AG04449 (cell line): ENCODE measurements at regions of chr12 and their contacts with region 1.

Region 1: GRCh38 chr12:114625294-114625851 is 58.6 kb downstream of the TBX3 start:
- DNase-seq: no peak
- H3K4me3 ChIP-seq: no peak overlapping the region
- CTCF ChIP-seq: peak; percentile 84

Region 2: GRCh38 chr12:114636723-114637483 is 11.5 kb after region 1 on chr12:
- CTCF ChIA-PET with region 1: interaction called, 60 read pairs
- POLR2A ChIA-PET with region 1: no interaction called
- DNase-seq: no peak
- H3K4me3 ChIP-seq: no peak overlapping the region
- CTCF ChIP-seq: peak; percentile 39

Region 3: DNA sequence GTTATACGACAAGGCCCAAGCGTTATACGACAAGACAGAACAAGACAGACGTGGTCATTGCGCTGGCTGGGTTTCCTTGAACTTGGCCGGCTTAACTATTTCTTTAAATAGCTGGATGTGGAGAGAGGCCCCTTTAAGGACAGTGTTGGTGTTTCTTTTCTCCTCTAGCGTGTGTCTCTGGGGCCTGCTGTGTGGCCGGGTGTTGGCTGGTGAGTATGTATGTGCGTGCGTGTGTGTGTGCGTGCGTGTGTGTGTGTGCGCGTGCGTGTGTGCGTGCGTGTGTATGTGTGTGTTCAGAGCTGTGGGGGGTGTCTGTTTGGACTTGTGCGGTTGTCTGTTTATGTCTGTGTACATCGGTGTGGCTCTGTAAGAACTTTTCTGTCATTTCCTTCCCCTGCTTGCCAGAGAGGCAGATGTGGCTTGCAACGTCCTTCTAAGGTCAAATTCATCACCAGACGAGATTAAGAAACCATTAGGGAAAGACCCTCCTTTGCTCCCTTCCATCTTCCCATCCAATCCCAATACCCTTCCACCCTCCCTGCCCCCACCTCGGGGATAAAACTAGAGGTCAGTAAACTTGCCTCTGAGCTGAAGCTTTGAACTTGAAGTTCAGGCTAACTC is 137.2 kb after region 1 on chr12:
- CTCF ChIA-PET with region 1: no interaction called
- POLR2A ChIA-PET with region 1: no interaction called
- DNase-seq: no peak
- H3K4me3 ChIP-seq: no peak overlapping the region
- CTCF ChIP-seq: no peak